H1 (cell line): ENCODE measurements at regions of chr4 and their contacts with region 1.

Region 1: DNA sequence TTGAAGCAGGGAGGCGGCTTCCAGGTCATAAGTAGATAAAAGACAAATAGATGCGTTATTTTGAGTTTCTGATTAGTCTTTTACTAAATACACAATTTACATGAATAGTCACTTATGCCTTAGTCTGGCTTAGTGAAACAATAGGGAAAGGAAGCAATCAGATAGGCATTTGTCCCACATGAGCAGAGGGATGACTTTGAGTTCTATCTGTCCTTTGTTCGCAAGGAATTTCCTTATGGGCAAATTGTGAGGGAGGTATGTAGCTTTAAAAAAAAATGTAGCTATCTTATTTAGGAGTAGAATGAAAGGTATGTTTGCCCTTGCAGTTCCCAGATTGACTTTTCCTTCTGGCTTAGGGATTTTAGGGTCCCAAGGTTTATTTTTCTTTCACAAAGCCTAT is 26.3 kb upstream of the ADH1C start:
- DNase-seq: no peak
- H3K4me3 ChIP-seq: no peak overlapping the region
- H3K27ac ChIP-seq: no peak overlapping the region
- H3K4me1 ChIP-seq: no peaks in the 10 kb centered on the region
- H3K27me3 ChIP-seq: no peaks in the 10 kb centered on the region
- CTCF ChIP-seq: no peak
- EP300 ChIP-seq: no peak
- POLR2A ChIP-seq: no peak
- RAD21 ChIP-seq: no peak

Region 2: GRCh38 chr4:99234331-99235010 is 144.4 kb before region 1 on chr4:
- CTCF ChIA-PET with region 1: no interaction called
- POLR2A ChIA-PET with region 1: no interaction called
- DNase-seq: no peak
- H3K4me3 ChIP-seq: no peak overlapping the region
- H3K27ac ChIP-seq: no peak overlapping the region
- H3K4me1 ChIP-seq: no peaks in the 10 kb centered on the region
- H3K27me3 ChIP-seq: no peaks in the 10 kb centered on the region
- CTCF ChIP-seq: no peak
- EP300 ChIP-seq: no peak
- POLR2A ChIP-seq: no peak
- RAD21 ChIP-seq: no peak

Region 3: GRCh38 chr4:99389606-99390005 is 10.7 kb after region 1 on chr4:
- CTCF ChIA-PET with region 1: interaction called, 20 read pairs
- POLR2A ChIA-PET with region 1: no interaction called
- DNase-seq: no peak
- H3K4me3 ChIP-seq: no peak overlapping the region
- H3K27ac ChIP-seq: no peak overlapping the region
- H3K4me1 ChIP-seq: no peaks in the 10 kb centered on the region
- H3K27me3 ChIP-seq: no peaks in the 10 kb centered on the region
- CTCF ChIP-seq: no peak
- EP300 ChIP-seq: no peak
- POLR2A ChIP-seq: no peak
- RAD21 ChIP-seq: no peak